ENCODE measurements at regions of chr7 and their contacts with region 1.

Region 1: DNA sequence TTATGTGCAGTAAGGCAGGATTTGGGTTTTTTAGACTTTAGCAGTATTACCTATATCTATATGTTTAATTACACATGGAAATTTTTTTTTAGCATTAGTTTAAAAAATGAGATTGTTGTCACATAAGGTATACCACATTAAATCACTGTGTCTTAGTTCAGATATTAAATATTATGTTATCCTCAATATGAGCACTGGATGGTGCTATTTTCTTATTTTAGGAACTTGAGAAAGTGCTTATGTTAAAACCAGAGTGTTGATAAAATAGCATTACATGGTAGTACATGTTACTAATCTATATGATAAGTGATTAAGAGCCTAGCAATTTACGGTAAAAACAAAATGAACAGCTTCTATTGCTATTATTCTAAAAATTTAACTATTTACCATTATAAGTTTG is 28.8 kb downstream of the MIOS start:
- DNase-seq: peak in 1 of 2 donors; percentile 57
- ATAC-seq: peak; percentile 58 to 65 (median 63)
- H3K4me3 ChIP-seq: no peak overlapping the region
- H3K4me3 Mint-ChIP-seq: no peak overlapping the region
- H3K27ac ChIP-seq: no peak overlapping the region
- H3K27ac Mint-ChIP-seq: peak overlapping the region; percentile 58 to 68
- H3K4me1 ChIP-seq: peaks cover 3% of the 10 kb centered on the region
- H3K4me1 Mint-ChIP-seq: peaks cover 7 to 11% of the 10 kb centered on the region in 2 donors
- H3K27me3 ChIP-seq: no peaks in the 10 kb centered on the region
- H3K27me3 Mint-ChIP-seq: no peaks in the 10 kb centered on the region
- CTCF ChIP-seq: peak; percentile 67

Region 2: DNA sequence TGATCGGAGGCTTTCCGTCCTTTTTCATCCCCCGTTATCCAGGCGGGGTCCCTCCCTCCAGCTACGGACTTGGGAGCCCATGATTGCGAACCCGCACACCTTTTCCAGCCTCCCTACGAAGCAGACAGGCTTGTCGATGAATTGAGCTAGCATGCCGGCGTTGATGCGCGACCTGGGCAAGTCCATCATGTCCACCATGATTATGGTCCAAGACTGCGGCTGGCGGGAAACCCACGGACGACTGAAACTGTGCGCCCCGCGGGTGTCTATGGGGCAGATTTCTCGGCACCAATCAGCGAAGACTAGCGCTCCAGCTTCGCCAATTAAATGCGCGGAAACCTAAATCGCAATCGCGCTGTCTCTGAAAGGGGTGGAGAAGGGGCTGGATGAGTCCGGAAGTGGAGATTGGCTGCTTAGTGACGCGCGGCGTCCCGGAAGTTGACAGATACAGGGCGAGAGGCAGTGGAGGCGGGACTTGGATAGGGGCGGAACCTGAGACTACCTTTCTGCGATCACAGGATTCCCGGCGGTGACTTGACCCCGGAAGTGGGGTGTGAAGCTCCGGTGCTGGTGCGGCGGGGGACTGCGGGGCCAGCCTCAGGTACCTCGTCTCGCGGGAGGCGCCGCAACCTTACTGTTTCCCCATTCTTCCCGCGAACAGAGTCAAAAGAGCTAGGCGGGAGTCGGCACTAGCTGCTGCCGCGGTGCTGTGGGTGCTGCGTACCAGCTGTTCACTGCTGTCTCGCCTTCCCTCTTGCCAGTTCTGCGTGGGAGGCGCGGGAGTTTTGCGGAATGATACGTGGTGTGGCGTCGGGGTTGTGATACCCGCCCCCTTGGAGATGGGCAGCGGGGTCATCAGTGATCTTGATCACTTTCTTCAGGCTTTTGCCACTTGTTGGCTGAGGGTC is 45.0 kb after region 1 on chr7 and contains the start of gene UMAD1:
- intact Hi-C with region 1: loop called (anchors 2 kb)
- DNase-seq: peak; percentile 96 to 99
- ATAC-seq: peak; percentile 92 to 99 (median 95)
- H3K4me3 ChIP-seq: peak within 1 kb of the TSS; percentile 77
- H3K4me3 Mint-ChIP-seq: peak within 1 kb of the TSS; percentile 93
- H3K27ac ChIP-seq: peak within 1 kb of the TSS; percentile 90
- H3K27ac Mint-ChIP-seq: peak within 1 kb of the TSS; percentile 94 to 98
- H3K4me1 ChIP-seq: peaks cover 11% of the 10 kb centered on the region
- H3K4me1 Mint-ChIP-seq: peaks cover 26 to 42% of the 10 kb centered on the region in 2 donors
- H3K27me3 ChIP-seq: no peaks in the 10 kb centered on the region
- H3K27me3 Mint-ChIP-seq: no peaks in the 10 kb centered on the region
- CTCF ChIP-seq: no peak
- total RNA-seq, gene UMAD1: 12.3 to 16.5 (median 14.6) TPM

Region 3: GRCh38 chr7:8035647-8036518 is 440.4 kb after region 1 on chr7:
- intact Hi-C with region 1: loop called (anchors 5 kb)
- DNase-seq: peak in 1 of 2 donors; percentile 68
- ATAC-seq: peak; percentile 92 to 99 (median 97)
- H3K4me3 ChIP-seq: no peak overlapping the region
- H3K4me3 Mint-ChIP-seq: no peak overlapping the region
- H3K27ac ChIP-seq: peak overlapping the region; percentile 6
- H3K27ac Mint-ChIP-seq: peak overlapping the region; percentile 46 to 82
- H3K4me1 ChIP-seq: peaks cover 15% of the 10 kb centered on the region
- H3K4me1 Mint-ChIP-seq: peaks cover 28 to 34% of the 10 kb centered on the region in 2 donors
- H3K27me3 ChIP-seq: no peaks in the 10 kb centered on the region
- H3K27me3 Mint-ChIP-seq: no peaks in the 10 kb centered on the region
- CTCF ChIP-seq: peak; percentile 79

Region 4: GRCh38 chr7:8190119-8190895 is 594.9 kb after region 1 on chr7:
- intact Hi-C with region 1: loop called (anchors 1 kb)
- DNase-seq: peak; percentile 33 to 87
- ATAC-seq: peak; percentile 68 to 90 (median 88)
- H3K4me3 ChIP-seq: no peak overlapping the region
- H3K4me3 Mint-ChIP-seq: no peak overlapping the region
- H3K27ac ChIP-seq: no peak overlapping the region
- H3K27ac Mint-ChIP-seq: no peak overlapping the region
- H3K4me1 ChIP-seq: peaks cover 6% of the 10 kb centered on the region
- H3K4me1 Mint-ChIP-seq: peaks cover 11 to 26% of the 10 kb centered on the region in 2 donors
- H3K27me3 ChIP-seq: peaks cover 4% of the 10 kb centered on the region
- H3K27me3 Mint-ChIP-seq: peaks cover 8 to 9% of the 10 kb centered on the region in 2 donors
- CTCF ChIP-seq: peak; percentile 85

Region 5: GRCh38 chr7:8217200-8218068 is 622.0 kb after region 1 on chr7:
- intact Hi-C with region 1: loop called (anchors 1 kb)
- DNase-seq: peak in 1 of 2 donors; percentile 86
- ATAC-seq: peak; percentile 75 to 79 (median 77)
- H3K4me3 ChIP-seq: no peak overlapping the region
- H3K4me3 Mint-ChIP-seq: no peak overlapping the region
- H3K27ac ChIP-seq: no peak overlapping the region
- H3K27ac Mint-ChIP-seq: no peak overlapping the region
- H3K4me1 ChIP-seq: no peaks in the 10 kb centered on the region
- H3K4me1 Mint-ChIP-seq: peaks cover 5 to 6% of the 10 kb centered on the region in 2 donors
- H3K27me3 ChIP-seq: no peaks in the 10 kb centered on the region
- H3K27me3 Mint-ChIP-seq: peaks cover 0 to 4% of the 10 kb centered on the region in 2 donors
- CTCF ChIP-seq: peak; percentile 81

Region 6: DNA sequence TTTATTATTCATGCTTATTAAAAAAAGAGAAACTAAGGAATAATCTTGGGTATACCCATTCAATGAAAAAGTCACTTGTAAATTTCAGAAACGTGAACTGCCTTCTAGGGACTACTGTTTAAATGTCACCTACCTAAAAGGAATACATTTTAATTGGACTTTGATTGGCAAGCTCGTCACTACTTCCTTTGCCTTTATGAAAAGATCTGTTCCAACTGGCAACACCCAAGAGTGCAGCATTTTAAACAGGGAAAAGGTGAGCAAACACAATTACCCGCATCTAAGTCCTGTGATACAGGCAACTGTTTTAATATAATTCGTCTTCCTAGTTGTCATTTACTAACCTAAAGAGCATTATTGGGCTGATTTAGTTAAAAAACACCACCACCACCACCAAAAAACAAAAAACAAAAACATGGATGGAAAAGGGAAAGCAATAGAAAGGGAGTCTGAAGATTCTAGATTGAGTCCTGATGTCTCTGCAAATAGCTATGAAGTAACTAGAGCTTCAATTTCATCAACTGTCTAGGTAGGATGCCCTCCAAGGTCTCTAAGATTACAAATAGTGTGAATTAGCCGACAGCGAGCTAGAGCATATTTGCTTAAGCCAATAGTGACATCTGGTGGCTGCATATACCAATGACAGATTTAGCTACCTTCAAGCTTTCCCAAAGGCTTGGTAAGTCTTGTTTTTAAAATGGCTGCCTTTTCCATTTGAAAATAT is 700.3 kb after region 1 on chr7:
- intact Hi-C with region 1: loop called (anchors 5 kb)
- DNase-seq: peak in 1 of 2 donors; percentile 83
- ATAC-seq: peak; percentile 84 to 91 (median 87)
- H3K4me3 ChIP-seq: no peak overlapping the region
- H3K4me3 Mint-ChIP-seq: no peak overlapping the region
- H3K27ac ChIP-seq: no peak overlapping the region
- H3K27ac Mint-ChIP-seq: no peak overlapping the region
- H3K4me1 ChIP-seq: no peaks in the 10 kb centered on the region
- H3K4me1 Mint-ChIP-seq: no peaks in the 10 kb centered on the region
- H3K27me3 ChIP-seq: peaks cover 6% of the 10 kb centered on the region
- H3K27me3 Mint-ChIP-seq: peaks cover 13 to 18% of the 10 kb centered on the region in 2 donors
- CTCF ChIP-seq: peak; percentile 77

Measured in natural killer cell (primary cell).